ENCODE measurements at regions of chr2 and their contacts with region 1.

Region 1: GRCh38 chr2:164841719-164842623 is at the start of gene COBLL1:
- DNase-seq: peak; percentile 78 to 84
- ATAC-seq: peak; percentile 74 to 91 (median 86)
- H3K4me3 ChIP-seq: peak within 1 kb of the TSS; percentile 62 to 96 (median 87)
- H3K27ac ChIP-seq: peak within 1 kb of the TSS; percentile 89 to 99 (median 97)
- H3K4me1 ChIP-seq: peaks cover 0 to 48% (median 27%) of the 10 kb centered on the region in 9 donors
- H3K27me3 ChIP-seq: peaks cover 0 to 19% (median 0%) of the 10 kb centered on the region in 7 donors
- CTCF ChIP-seq: peak; percentile 74 to 91 (median 84)
- total RNA-seq, gene COBLL1: 12.1 to 20.5 (median 15.1) TPM

Region 2: GRCh38 chr2:164657129-164657528 is 184.8 kb before region 1 on chr2:
- intact Hi-C with region 1: no loop called
- DNase-seq: no peak
- ATAC-seq: no peak
- H3K4me3 ChIP-seq: no peak overlapping the region
- H3K27ac ChIP-seq: no peak overlapping the region
- H3K4me1 ChIP-seq: peaks cover 0 to 8% (median 4%) of the 10 kb centered on the region in 9 donors
- H3K27me3 ChIP-seq: no peaks in the 10 kb centered on the region
- CTCF ChIP-seq: no peak

Region 3: DNA sequence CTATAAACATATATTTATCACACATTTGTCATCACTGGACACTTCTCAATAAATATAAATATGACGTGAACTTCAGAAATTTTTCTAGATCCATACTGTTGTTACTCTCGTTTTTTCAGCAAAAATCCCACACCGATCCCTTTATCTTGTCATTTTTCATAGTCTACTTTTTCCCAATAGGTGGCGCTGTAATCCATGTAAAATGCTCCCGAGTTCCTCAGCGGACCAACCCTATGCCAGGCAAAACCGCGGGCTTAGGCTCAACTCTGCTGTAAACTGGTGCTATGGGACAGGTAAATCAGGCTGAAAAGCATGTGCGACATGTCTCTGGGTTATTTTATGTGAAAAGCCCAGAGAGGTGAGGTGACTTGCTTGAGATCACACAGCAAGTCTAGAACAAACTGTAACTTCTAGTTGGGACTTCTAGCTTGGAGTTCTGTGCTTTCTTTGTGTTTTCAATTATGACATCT is 104.3 kb before region 1 on chr2:
- intact Hi-C with region 1: loop called in 9 of 10 experiments (anchors 1 to 5 kb)
- DNase-seq: peak; percentile 27 to 54
- ATAC-seq: peak; percentile 41 to 89 (median 83)
- H3K4me3 ChIP-seq: peak overlapping the region in 2 of 10 donors; percentile 3 to 13
- H3K27ac ChIP-seq: peak overlapping the region in 1 of 10 donors; percentile 17
- H3K4me1 ChIP-seq: peaks cover 0 to 57% (median 20%) of the 10 kb centered on the region in 9 donors
- H3K27me3 ChIP-seq: no peaks in the 10 kb centered on the region
- CTCF ChIP-seq: peak; percentile 42 to 92 (median 74)

Region 4: GRCh38 chr2:164771897-164772296 is 70.1 kb before region 1 on chr2:
- intact Hi-C with region 1: loop called in 3 of 10 experiments (anchors 5 to 10 kb)
- DNase-seq: no peak
- ATAC-seq: no peak
- H3K4me3 ChIP-seq: no peak overlapping the region
- H3K27ac ChIP-seq: no peak overlapping the region
- H3K4me1 ChIP-seq: peaks cover 0 to 48% (median 0%) of the 10 kb centered on the region in 9 donors
- H3K27me3 ChIP-seq: no peaks in the 10 kb centered on the region
- CTCF ChIP-seq: no peak

Region 5: DNA sequence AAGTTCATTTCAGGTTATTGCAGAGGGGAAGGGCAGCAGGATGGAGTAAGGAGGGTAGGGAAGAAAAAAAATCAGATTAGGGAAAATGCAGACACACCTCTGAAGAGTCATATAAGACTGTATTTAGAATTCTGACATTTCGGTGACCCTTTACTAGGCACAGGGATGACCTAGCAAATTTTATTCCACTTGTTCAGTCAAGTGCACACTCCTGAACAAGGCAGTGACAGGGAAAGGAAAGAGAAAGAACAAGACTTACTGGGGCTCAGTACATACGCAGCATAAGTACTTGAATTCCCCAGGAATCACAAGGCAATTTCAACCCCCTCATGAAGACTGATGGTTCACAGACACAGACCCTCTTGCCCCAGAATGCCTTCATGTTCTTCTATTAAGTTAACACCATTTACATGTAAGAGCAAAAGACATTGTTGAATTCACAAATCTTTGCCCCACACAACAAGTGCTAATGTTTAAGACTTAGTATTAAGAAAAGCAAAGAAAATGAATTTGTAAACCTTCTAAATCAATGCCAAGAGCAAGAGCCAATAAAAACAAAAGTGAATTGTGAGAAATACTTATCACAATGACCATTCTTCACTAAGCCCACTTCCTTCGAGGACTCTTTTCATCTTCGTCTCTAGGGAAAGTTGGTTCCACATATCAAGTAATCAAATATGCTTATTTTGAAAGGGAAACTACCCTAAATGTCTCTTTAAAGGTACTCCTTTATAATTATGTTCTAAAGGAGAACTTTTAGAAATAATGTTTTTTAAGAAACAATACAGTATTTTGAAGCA is 47.3 kb before region 1 on chr2:
- intact Hi-C with region 1: loop called in 1 of 10 experiments (anchors 5 kb)
- DNase-seq: no peak
- ATAC-seq: peak in 6 of 8 donors; percentile 35 to 74 (median 46)
- H3K4me3 ChIP-seq: peak overlapping the region in 1 of 10 donors; percentile 1
- H3K27ac ChIP-seq: peak overlapping the region in 9 of 10 donors; percentile 9 to 76 (median 54)
- H3K4me1 ChIP-seq: peaks cover 0 to 81% (median 31%) of the 10 kb centered on the region in 9 donors
- H3K27me3 ChIP-seq: no peaks in the 10 kb centered on the region
- CTCF ChIP-seq: no peak

Region 6: GRCh38 chr2:164917296-164917903 is 75.4 kb after region 1 on chr2:
- intact Hi-C with region 1: loop called (anchors 2 to 10 kb)
- DNase-seq: peak; percentile 16 to 49
- ATAC-seq: peak in 7 of 8 donors; percentile 55 to 79 (median 68)
- H3K4me3 ChIP-seq: no peak overlapping the region
- H3K27ac ChIP-seq: no peak overlapping the region
- H3K4me1 ChIP-seq: peaks cover 0 to 25% (median 15%) of the 10 kb centered on the region in 9 donors
- H3K27me3 ChIP-seq: no peaks in the 10 kb centered on the region
- CTCF ChIP-seq: peak; percentile 23 to 80 (median 66)

Measured in heart right ventricle (tissue), 16 donors.